HepG2 (cell line): ENCODE measurements at regions of chr10 and their contacts with region 1.

Region 1: DNA sequence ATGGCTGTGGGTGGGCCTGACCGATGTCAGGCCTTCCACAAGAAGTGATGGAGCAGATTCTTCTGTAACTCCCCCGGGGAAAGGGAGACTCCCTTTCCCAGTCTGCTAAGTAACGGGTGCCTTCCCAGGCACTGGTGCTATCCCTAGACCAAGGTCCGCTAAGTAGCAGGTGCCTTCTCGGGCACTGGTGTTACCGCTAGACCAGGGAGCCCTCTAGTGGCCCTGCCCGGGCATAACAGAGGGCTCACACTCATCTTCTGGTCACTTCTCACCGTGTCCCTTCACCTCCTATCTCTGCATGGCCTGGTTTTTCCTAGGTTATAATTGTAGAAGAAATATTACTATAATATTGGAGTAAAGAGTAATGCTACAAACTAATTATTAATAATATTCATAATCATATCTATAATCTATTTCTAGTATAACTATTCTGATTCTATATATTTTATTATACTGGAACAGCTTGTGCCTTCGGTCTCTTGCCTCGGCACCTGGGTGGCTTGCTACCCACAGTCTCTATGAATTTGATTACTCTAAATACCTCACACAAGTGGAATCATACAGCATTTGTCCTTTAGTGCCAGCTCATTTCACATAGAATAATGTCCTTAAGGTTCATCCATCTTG is 1378.7 kb downstream of the XPNPEP1 start:
- DNase-seq: peak; percentile 3
- ATAC-seq: peak; percentile 77
- H3K4me3 ChIP-seq: no peak overlapping the region
- H3K27ac ChIP-seq: no peak overlapping the region
- H3K4me1 ChIP-seq: no peaks in the 10 kb centered on the region
- H3K27me3 ChIP-seq: no peaks in the 10 kb centered on the region
- CTCF ChIP-seq: peak; percentile 73
- EP300 ChIP-seq: no peak
- POLR2A ChIP-seq: no peak
- RAD21 ChIP-seq: peak; percentile 47

Region 2: DNA sequence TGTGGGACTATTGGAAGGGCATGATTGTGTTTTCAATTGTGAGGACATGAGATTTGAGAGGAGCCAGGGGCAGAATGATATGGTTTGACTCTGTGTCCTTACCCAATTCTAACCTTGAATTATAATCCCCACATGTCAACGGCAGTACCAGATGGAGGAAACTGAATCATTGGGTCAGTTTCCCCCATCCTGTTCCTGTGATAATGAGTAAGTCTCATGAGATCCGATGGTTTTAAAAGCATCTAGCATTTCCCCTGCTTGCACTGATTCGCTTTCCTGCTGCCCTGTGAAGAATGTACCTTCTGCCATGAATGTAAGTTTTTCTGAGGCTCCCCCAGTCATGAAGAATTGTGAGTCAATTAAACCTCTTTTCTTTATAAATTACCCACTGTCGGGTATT is 11.6 kb after region 1 on chr10:
- CTCF ChIA-PET with region 1: no interaction called
- POLR2A ChIA-PET with region 1: no interaction called
- in situ Hi-C with region 1: no loop called
- intact Hi-C with region 1: loop called (anchors 1 kb)
- DNase-seq: no peak
- ATAC-seq: no peak
- H3K4me3 ChIP-seq: no peak overlapping the region
- H3K27ac ChIP-seq: no peak overlapping the region
- H3K4me1 ChIP-seq: no peaks in the 10 kb centered on the region
- H3K27me3 ChIP-seq: no peaks in the 10 kb centered on the region
- CTCF ChIP-seq: no peak
- EP300 ChIP-seq: no peak
- POLR2A ChIP-seq: no peak
- RAD21 ChIP-seq: no peak

Region 3: GRCh38 chr10:108601851-108602250 is 57.2 kb after region 1 on chr10:
- CTCF ChIA-PET with region 1: no interaction called
- POLR2A ChIA-PET with region 1: no interaction called
- in situ Hi-C with region 1: no loop called
- intact Hi-C with region 1: no loop called
- DNase-seq: no peak
- ATAC-seq: no peak
- H3K4me3 ChIP-seq: no peak overlapping the region
- H3K27ac ChIP-seq: no peak overlapping the region
- H3K4me1 ChIP-seq: peaks cover 16% of the 10 kb centered on the region
- H3K27me3 ChIP-seq: no peaks in the 10 kb centered on the region
- CTCF ChIP-seq: no peak
- EP300 ChIP-seq: no peak
- POLR2A ChIP-seq: no peak
- RAD21 ChIP-seq: no peak